Activated B cell treated with CpG ODN at 0.5 μM for 24 hours (primary cell): ENCODE measurements at regions of chr1 and their contacts with region 1.

Region 1: GRCh38 chr1:26730695-26731094 is 34.9 kb downstream of the ARID1A start:
- DNase-seq: no peak
- ATAC-seq: no peak
- H3K4me3 Mint-ChIP-seq: no peak overlapping the region
- H3K27ac Mint-ChIP-seq: peak overlapping the region; percentile 50
- H3K4me1 Mint-ChIP-seq: peaks cover 50% of the 10 kb centered on the region
- H3K27me3 Mint-ChIP-seq: no peaks in the 10 kb centered on the region
- CTCF ChIP-seq: no peak

Region 2: DNA sequence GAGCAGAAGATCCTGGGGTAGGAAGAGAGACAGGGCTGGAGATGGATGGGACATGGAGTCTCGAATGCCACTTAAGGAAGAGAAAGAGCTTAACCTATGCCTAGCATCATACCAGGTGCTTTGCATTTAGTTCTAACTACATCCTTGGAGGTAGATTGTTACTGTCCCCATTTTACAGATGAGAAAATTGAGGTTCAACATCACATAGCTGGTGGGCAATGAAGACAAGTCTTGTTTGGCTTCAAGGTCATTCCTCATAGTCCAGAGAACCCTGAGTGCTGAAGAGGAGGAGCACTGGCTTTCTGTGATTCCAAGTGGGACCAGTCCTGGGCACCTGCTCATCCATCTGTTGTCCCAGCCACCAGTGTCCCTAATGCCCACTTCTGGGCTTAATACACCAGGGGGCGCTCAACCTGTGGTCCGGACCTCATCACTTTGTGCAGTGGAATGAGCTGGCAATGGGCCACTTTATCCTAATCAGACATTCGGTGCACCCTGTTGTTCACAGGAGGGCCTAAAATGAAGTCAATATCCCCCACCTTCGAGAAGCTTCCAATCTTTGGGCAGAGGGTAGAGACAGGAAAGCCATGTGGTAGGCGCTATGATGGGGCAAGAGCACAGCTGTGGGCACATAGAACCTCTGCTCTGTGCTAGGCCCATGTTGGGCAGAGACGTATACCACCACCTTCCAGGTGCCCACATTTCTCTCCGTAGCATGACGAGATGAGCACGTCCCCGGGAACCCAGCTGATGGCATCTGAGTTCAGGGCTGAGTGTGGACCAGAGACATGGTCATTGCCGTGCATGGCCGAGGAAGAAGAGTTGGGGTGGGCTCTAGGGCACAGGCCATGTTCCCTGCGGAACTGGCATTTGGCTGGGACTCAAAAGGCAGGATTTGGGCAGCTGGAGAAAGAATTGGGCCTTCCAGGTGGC is 191.9 kb before region 1 on chr1:
- CTCF ChIA-PET with region 1: no interaction called
- POLR2A ChIA-PET with region 1: no interaction called
- intact Hi-C with region 1: no loop called
- DNase-seq: no peak
- ATAC-seq: no peak
- H3K4me3 Mint-ChIP-seq: peak overlapping the region; percentile 48
- H3K27ac Mint-ChIP-seq: peak overlapping the region; percentile 99
- H3K4me1 Mint-ChIP-seq: peaks cover 87% of the 10 kb centered on the region
- H3K27me3 Mint-ChIP-seq: no peaks in the 10 kb centered on the region
- CTCF ChIP-seq: no peak

Region 3: GRCh38 chr1:26608895-26609294 is 121.8 kb before region 1 on chr1:
- CTCF ChIA-PET with region 1: no interaction called
- POLR2A ChIA-PET with region 1: no interaction called
- intact Hi-C with region 1: no loop called
- DNase-seq: no peak
- ATAC-seq: no peak
- H3K4me3 Mint-ChIP-seq: no peak overlapping the region
- H3K27ac Mint-ChIP-seq: no peak overlapping the region
- H3K4me1 Mint-ChIP-seq: no peaks in the 10 kb centered on the region
- H3K27me3 Mint-ChIP-seq: no peaks in the 10 kb centered on the region
- CTCF ChIP-seq: no peak

Region 4: GRCh38 chr1:26744075-26744959 is 13.6 kb after region 1 on chr1:
- CTCF ChIA-PET with region 1: interaction called, 4 read pairs
- POLR2A ChIA-PET with region 1: interaction called, 10 read pairs
- intact Hi-C with region 1: no loop called
- DNase-seq: peak; percentile 57
- ATAC-seq: peak; percentile 96
- H3K4me3 Mint-ChIP-seq: peak overlapping the region; percentile 79
- H3K27ac Mint-ChIP-seq: peak overlapping the region; percentile 97
- H3K4me1 Mint-ChIP-seq: peaks cover 91% of the 10 kb centered on the region
- H3K27me3 Mint-ChIP-seq: no peaks in the 10 kb centered on the region
- CTCF ChIP-seq: no peak